HCT116 (cell line): ENCODE measurements at regions of chr11 and their contacts with region 1.

Region 1: GRCh38 chr11:33829433-33830141 is 55.3 kb upstream of the FBXO3 start:
- DNase-seq: peak; percentile 40
- ATAC-seq: peak; percentile 91
- H3K4me3 ChIP-seq: no peak overlapping the region
- H3K27ac ChIP-seq: no peak overlapping the region
- H3K4me1 ChIP-seq: peaks cover 0 to 11% of the 10 kb centered on the region in 2 experiments; a peak in 1 of 4 replicates
- H3K27me3 ChIP-seq: no peaks in the 10 kb centered on the region
- CTCF ChIP-seq: peak; percentile 74 to 83 (median 81)
- POLR2A ChIP-seq: no peak
- RAD21 ChIP-seq: peak; percentile 87

Region 2: DNA sequence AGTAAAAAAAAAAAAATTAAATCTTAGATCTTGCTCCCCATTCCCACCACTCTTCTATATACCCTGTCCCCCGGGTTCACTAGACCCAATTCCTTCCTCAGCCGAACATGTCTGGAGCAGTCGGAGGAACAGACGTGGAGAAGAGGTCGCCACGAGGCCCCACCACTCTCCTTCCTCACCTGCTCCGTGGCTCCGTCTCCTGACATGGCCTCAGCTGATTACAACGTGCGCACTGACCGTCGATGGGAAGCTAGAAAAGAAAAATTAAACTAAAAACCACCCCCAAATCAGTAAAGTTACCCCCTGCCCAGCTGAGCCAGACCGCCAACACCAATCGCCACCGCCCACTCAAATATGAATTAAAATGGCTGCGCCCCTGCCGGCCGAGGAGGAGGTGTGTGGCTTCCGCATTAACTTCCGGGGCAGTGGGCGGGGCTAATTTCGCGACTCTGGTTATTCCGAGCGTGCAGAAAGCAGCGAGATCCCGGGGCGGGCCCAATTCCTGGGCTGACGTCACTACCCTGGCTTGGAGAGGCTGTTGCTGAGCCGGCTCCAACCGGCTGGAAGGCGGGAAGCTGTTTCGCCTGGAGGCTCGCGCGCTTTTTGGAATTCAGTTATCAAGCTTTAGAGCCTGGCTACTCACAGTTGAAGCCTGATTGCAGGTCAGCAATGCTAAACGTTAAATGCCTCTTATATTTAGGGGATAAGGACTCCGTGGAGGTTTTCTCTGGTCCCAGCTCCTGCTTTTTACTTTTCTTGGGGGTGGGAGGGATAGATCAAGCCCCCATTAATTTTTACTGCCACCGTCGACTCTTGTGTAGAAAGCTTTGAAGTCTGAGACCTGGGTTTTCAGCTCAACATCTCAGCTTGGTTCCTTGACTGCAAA is 668.2 kb before region 1 on chr11 and contains the start of gene CSTF3:
- CTCF ChIA-PET with region 1: no interaction called
- POLR2A ChIA-PET with region 1: no interaction called
- RAD21 ChIA-PET with region 1: no interaction called
- intact Hi-C with region 1: loop called (anchors 10 kb)
- DNase-seq: peak; percentile 97
- ATAC-seq: peak; percentile 97
- H3K4me3 ChIP-seq: peak within 1 kb of the TSS; percentile 70 to 85
- H3K27ac ChIP-seq: peak within 1 kb of the TSS; percentile 76
- H3K4me1 ChIP-seq: peaks cover 6 to 27% of the 10 kb centered on the region in 2 experiments; a peak in 3 of 4 replicates
- H3K27me3 ChIP-seq: no peaks in the 10 kb centered on the region
- CTCF ChIP-seq: peak in 2 of 3 experiments; percentile 11 to 20; a peak in 1 of 6 replicates
- POLR2A ChIP-seq: peak; percentile 45
- RAD21 ChIP-seq: no peak
- total RNA-seq, gene CSTF3: 39.3 TPM

Region 3: GRCh38 chr11:33362051-33362910 is 467.3 kb before region 1 on chr11:
- CTCF ChIA-PET with region 1: interaction called, 4 read pairs
- POLR2A ChIA-PET with region 1: no interaction called
- RAD21 ChIA-PET with region 1: no interaction called
- intact Hi-C with region 1: loop called (anchors 1 kb)
- DNase-seq: peak; percentile 32
- ATAC-seq: peak; percentile 70
- H3K4me3 ChIP-seq: no peak overlapping the region
- H3K27ac ChIP-seq: no peak overlapping the region
- H3K4me1 ChIP-seq: no peaks in the 10 kb centered on the region
- H3K27me3 ChIP-seq: no peaks in the 10 kb centered on the region
- CTCF ChIP-seq: peak; percentile 42 to 85 (median 72)
- POLR2A ChIP-seq: no peak
- RAD21 ChIP-seq: peak; percentile 79

Region 4: GRCh38 chr11:33716236-33716635 is 113.4 kb before region 1 on chr11:
- CTCF ChIA-PET with region 1: interaction called, 4 read pairs
- POLR2A ChIA-PET with region 1: no interaction called
- RAD21 ChIA-PET with region 1: no interaction called
- intact Hi-C with region 1: loop called (anchors 1 kb)
- DNase-seq: no peak
- ATAC-seq: peak; percentile 75
- H3K4me3 ChIP-seq: no peak overlapping the region
- H3K27ac ChIP-seq: no peak overlapping the region
- H3K4me1 ChIP-seq: no peaks in the 10 kb centered on the region
- H3K27me3 ChIP-seq: no peaks in the 10 kb centered on the region
- CTCF ChIP-seq: peak; percentile 37 to 51 (median 47); a peak in 4 of 6 replicates
- POLR2A ChIP-seq: no peak
- RAD21 ChIP-seq: peak; percentile 66

Region 5: DNA sequence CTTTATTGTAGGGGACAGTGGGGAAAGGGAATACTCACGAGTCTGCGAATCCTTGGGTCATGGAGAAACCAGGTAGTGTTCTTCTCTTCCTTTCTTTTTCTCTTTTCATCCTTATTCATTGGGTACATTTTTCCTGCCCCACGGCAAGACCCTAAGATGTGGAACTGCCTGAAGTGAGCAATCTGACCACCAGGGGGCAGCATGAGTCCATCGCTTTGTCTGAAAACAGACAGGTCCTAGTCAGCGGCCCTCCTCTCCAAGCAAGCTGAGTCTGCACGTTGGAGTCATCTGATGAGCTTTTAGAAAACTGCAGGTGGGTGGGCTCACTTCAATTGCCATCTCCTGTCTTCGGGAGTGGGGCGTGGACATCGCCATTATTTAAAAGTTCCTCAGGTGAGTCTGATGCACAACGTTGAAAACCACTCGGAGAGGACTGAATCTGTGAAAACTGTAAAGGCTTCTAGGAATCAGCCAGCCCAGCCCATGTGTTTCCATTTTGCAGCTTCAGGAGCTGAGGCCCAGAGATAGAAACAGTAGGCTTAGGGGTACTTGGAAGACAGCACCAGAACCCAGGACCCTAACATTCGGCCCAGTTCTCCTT is 21.3 kb before region 1 on chr11:
- CTCF ChIA-PET with region 1: interaction called, 18 read pairs
- POLR2A ChIA-PET with region 1: no interaction called
- RAD21 ChIA-PET with region 1: interaction called in 1 of 2 experiments, 5 read pairs
- intact Hi-C with region 1: loop called (anchors 1 kb)
- DNase-seq: peak; percentile 75
- ATAC-seq: peak; percentile 100
- H3K4me3 ChIP-seq: no peak overlapping the region
- H3K27ac ChIP-seq: no peak overlapping the region
- H3K4me1 ChIP-seq: peaks cover 0 to 6% of the 10 kb centered on the region in 2 experiments; a peak in 1 of 4 replicates
- H3K27me3 ChIP-seq: no peaks in the 10 kb centered on the region
- CTCF ChIP-seq: peak; percentile 78 to 93 (median 90); a peak in 5 of 6 replicates
- POLR2A ChIP-seq: no peak
- RAD21 ChIP-seq: peak; percentile 88